ENCODE measurements at regions of chr16 and their contacts with region 1.

Region 1: GRCh38 chr16:54929090-54930004 is 1.3 kb upstream of the IRX5 start:
- DNase-seq: peak; percentile 99
- ATAC-seq: peak; percentile 95

Region 2: DNA sequence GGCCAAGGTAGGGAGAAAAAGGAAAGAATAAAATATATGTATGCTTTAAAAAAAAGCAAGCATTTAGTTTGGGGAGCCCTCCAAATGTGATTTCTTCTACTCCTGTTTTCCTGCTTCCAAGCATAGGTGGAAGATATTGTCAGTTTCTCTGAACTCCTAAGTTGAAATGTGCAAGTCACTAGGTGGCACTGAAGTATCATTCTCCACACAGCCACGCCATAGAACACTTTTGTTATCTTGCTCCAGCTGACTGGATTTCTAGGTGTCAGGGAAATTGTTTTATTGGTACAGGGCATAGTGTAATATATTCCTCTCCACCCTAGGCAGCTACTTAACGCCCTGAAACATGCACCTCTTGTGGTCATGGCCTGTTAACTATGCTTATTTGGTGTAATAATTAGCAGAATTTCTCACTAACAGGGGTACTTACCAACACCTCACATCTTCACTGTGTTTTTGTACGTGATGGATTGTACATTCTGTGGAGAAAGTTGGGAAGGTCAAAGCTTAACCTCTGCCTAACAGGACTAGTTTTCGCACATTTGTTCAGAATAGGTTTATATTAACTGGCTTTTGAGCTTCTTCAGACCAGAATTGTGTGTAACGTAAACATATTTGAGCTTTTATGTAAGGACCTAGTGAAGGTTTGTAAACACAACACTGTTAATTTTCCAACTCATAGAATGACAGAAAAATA is 1156.0 kb before region 1 on chr16:
- intact Hi-C with region 1: loop called (anchors 5 kb)
- DNase-seq: no peak
- ATAC-seq: peak; percentile 76

Region 3: GRCh38 chr16:53968454-53968853 is 960.9 kb before region 1 on chr16:
- intact Hi-C with region 1: loop called (anchors 5 kb)
- DNase-seq: no peak
- ATAC-seq: peak; percentile 59

Region 4: DNA sequence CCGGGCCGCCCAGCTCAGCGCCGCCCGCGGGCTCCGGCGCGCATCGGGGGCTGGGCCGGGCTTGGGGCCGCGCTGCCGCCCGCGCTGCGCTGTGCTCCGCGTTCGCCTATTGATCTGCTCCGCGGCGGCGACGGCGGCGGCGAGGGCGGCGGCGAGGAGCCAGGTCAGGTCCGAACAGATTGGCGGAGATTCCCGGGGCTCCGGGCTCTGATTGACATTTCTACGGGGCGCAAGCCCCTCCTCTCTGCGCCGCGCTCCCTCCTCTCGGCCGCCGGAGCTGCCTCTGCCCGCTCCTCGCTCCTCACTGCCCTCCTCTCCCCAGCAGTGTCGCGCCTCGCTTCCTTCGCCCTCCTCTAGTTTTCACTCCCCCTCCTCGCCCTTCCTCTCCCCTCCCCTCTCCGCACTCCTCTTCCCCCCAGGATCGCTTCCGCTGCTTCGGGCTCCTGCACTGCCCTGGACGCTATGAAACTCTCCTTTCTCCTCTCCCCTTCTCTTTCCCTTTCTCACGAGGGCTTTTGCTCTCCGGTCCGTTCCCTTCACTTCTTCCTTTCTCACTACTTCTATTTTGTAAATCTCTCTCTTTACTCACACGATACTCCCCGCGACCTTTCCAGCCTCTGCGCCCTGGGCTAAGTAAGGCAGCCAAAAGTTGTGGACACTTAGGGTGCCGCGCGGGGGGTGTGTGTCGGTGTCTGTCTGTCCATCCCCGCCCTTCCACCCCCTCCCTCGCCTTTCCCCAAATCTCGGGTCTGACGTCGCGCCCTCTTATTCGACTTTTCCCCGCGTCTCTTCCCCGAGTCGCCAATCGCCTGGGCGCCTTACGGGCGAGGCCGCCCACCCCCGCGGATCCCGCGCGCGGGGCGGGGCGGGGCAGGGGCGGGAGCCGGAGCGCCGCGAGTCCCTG is 643.0 kb before region 1 on chr16 and contains the start of gene IRX3:
- intact Hi-C with region 1: loop called (anchors 2 kb)
- DNase-seq: peak; percentile 93
- ATAC-seq: peak; percentile 90
- total RNA-seq, gene IRX3: 38.8 TPM

Region 5: DNA sequence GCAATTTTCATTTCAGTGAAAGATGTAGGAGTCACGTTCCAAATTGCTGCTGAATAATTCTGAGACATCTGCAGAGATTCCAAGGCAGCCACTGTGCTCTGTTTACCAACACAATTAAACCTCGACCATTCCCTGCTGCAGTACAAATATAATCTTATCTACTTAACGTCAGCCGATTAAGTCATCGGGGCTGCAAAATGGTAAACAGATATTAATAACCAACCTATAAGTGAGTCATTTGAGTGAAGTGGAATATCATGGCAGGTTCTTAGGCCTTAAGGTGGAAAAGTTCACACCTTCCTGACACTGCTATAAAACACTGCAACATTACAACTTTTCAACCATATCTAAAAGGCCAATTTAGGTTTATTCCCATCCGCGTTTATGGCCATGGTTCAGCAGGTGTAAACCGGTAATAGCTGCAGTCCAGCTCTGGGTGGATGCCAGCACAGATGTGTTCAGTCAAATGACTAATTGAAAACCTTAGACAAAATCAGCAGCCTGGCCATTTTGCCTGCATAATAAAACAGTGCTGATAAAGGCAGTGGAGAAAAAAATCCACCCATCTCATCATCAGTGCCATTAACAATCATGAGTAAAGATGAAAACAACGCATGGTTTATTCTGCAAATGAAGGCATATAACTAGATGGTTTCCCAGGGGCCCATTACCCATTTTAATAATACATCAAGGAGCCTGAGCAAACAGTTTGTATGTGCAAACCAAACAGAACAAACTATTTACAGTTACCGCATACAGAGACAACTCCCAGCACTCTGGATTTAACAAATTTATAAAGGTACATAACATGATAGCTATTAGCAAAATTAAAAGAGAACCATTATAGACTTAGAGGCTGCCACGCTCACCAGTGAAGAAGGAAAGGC is 439.9 kb before region 1 on chr16:
- intact Hi-C with region 1: loop called (anchors 10 kb)
- DNase-seq: no peak
- ATAC-seq: peak; percentile 30

Region 6: DNA sequence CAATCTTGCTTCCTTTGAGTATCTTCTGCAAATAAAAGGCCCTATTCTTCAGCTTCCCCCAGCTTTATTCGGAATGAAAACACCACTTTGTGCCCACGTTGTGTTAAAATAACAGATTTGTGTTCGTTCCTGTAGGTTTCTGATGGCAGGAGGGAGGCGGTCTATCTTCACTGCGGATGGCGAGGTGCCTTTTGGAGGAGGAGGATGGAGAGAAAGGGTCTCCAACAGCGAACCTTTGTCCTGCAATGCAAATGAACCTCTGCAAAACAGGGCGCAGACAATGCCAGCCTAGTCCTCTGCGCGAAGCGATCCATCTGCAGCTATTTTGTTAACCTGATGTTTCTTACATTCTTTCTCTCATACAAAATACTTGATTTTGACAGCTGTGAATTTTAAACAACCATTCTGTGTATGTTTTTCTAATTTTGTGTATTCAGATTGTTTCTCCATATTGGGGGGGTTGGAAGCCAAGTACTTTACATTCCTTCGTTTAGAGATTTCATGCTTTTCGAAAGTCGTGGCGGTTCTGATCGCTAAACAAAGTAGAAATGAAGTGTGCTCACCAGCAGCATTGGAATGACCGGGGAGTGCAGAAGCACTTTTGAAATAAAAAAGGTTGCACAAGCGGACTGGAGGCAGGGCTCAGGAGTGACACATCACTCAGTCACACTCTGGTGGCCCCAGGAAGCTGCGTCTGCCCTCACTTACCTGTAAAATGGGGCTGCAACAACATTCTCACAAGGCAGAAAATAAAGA is 277.7 kb before region 1 on chr16:
- intact Hi-C with region 1: loop called (anchors 5 kb)
- DNase-seq: no peak
- ATAC-seq: no peak

Region 7: DNA sequence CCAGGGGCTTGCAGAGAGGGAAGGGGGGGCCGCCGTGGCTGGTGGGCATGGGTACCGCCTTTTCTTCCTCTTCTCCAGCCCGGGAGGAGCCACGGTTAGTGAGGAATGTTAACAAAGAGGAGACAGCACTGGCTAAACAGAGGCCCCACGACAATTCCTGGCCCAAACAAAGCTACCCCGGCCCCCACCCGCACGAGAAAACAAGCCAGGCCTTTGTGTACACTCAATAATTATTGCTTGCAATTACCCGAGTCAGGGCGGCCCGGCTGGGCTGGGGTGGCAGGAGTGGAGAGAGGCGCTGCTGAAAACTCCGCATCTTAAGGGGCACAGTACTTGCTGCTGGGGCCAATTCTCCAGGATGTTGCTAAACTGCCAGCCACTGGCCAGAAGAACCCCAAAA is 57.7 kb after region 1 on chr16:
- intact Hi-C with region 1: no loop called
- DNase-seq: no peak
- ATAC-seq: no peak

Region 8: GRCh38 chr16:55189682-55190636 is 260.6 kb after region 1 on chr16:
- intact Hi-C with region 1: no loop called
- DNase-seq: no peak
- ATAC-seq: no peak